Activated CD8-positive, alpha-beta memory T cell treated with anti-CD3 and anti-CD28 coated beads, Interleukin-2, amount 10 ng/mL, durations not matched to agents 7 days and 5 days (primary cell): ENCODE measurements at regions of chr3 and their contacts with region 1.

Region 1: GRCh38 chr3:114383875-114384557 is 90.2 kb downstream of the TIGIT start:
- DNase-seq: peak; percentile 81
- ATAC-seq: peak; percentile 90
- H3K4me3 Mint-ChIP-seq: peak overlapping the region; percentile 65
- H3K27ac Mint-ChIP-seq: peak overlapping the region; percentile 83
- H3K4me1 Mint-ChIP-seq: peaks cover 13% of the 10 kb centered on the region
- H3K27me3 Mint-ChIP-seq: no peaks in the 10 kb centered on the region

Region 2: DNA sequence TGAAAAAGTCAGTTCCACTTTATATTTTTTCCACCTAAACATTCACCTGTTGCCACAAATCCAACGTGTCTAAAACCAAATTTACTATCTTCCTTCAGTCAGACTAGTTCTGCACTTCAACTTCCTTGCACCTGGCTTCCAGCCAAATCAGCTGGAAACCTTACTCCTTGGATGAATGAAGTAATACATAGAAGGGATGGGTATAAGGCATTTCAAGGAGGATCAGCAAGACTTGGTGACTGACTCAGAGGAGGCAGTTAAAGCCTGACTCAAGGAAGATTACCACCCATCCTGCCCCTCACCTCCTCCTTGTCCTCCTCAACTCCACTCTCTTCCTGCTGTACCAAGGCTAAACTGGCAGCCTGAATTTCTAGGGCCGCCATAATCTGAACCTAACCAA is 290.4 kb before region 1 on chr3:
- CTCF ChIA-PET with region 1: no interaction called
- DNase-seq: no peak
- ATAC-seq: no peak
- H3K4me3 Mint-ChIP-seq: no peak overlapping the region
- H3K27ac Mint-ChIP-seq: no peak overlapping the region
- H3K4me1 Mint-ChIP-seq: peaks cover 2% of the 10 kb centered on the region
- H3K27me3 Mint-ChIP-seq: peaks cover 7% of the 10 kb centered on the region

Region 3: DNA sequence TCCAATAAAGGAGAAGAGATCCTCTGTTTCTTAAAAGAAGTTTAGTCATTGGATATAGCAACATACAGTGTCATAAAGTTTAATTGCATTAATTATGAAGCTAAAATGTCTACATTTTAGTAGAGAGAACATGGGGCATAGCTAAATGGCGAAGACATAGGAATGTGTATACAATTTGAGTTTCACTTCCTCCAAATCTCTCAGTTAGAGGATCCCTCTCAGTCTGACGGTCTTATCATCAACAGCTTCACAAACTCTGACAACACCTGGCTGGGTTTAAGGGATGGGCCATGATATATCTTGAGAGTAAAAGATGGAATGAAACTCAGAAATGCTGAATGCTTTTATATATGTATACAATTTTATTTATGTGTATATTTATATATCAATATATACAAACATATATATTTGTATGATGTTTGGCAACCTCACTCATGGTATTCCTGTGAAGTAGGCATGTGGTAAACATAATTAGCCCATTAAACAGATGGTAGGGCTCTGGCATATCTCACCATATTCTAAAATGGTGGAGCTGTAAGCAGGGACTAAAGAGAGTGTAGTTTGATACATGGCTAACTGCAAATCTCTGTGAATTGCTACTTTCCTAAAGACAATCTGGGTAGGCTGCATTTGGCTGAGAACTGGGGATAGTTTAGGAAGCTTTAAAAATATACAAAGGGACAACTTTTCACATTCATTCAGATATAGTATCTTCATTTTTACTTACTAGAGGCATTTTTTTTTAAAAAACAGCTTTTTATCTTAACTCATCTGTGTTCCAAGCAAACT is 21.4 kb after region 1 on chr3:
- CTCF ChIA-PET with region 1: interaction called, 14 read pairs
- DNase-seq: no peak
- ATAC-seq: no peak
- H3K4me3 Mint-ChIP-seq: no peak overlapping the region
- H3K27ac Mint-ChIP-seq: no peak overlapping the region
- H3K4me1 Mint-ChIP-seq: no peaks in the 10 kb centered on the region
- H3K27me3 Mint-ChIP-seq: no peaks in the 10 kb centered on the region